K562 (cell line): ENCODE measurements at regions of chr9 and their contacts with region 1.

Region 1: DNA sequence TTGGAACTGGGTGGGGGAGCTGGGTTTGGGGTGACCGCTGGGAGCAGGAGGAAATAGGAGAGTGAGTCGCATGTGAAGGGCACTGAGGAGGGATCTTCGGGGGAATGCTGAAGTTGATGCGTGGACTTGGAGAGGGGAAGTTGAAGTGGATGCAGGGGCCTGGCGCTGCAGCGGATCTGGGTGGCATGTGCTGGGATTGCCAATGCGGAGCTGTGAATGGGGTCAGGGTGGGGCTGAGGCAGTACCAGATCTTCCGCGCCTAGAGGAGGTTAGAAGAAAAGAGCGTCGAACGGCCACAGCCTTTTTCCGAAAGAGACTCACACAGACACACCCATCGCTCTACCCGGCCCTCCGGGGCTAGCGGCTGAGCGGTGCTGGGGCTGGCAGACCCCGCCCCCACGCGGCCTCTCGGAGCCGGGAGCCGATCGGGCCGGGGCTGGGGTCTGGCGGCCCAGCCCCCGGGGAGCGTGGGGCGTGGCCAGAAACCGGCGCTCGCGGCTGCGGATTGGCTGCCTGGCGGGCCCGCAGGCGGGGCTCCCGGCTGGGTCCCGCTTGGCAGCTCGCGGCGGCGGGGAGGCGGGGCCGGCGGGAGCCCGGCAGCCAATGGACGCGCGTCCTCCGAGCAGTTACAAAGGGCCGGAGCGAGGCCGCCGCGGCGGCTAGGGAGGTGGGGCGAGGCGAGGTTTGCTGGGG is at the start of gene TGFBR1:
- DNase-seq: peak; percentile 96 to 99 (median 99)
- ATAC-seq: peak; percentile 92
- H3K4me3 ChIP-seq: peak within 1 kb of the TSS; percentile 76
- H3K27ac ChIP-seq: peak within 1 kb of the TSS; percentile 75
- H3K4me1 ChIP-seq: peaks cover 22 to 38% of the 10 kb centered on the region in 2 experiments
- H3K27me3 ChIP-seq: no peaks in the 10 kb centered on the region
- CTCF ChIP-seq: peak; percentile 18 to 39 (median 34); a peak in 3 of 6 replicates
- EP300 ChIP-seq: no peak
- POLR2A ChIP-seq: peak; percentile 74
- RAD21 ChIP-seq: peak; percentile 46 to 65
- polyA plus RNA-seq, gene TGFBR1: 15.9 to 57.6 TPM

Region 2: DNA sequence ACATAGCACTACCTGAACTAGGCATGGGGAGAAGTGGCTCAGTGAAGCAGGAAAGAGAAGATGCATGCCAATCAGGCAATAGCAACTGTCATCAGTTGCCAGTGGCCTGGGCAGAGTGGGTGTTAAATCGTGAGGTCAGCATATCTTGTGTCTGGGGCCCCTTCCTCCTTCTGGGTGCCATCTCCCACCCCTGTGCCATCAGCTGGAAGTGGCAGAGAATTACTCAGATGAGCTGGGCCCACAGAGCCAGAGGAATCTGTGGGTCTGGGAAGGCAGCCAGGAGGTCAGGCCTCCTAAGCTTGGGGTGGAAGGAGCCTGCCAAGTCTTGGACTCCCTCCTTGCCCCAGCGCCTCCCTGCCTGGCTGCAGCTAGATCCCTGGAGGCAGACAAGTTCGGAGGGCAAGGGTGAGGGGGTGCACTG is 230.6 kb before region 1 on chr9:
- CTCF ChIA-PET with region 1: no interaction called
- POLR2A ChIA-PET with region 1: no interaction called
- in situ Hi-C with region 1: no loop called
- intact Hi-C with region 1: no loop called
- DNase-seq: no peak
- ATAC-seq: no peak
- H3K4me3 ChIP-seq: no peak overlapping the region
- H3K27ac ChIP-seq: no peak overlapping the region
- H3K4me1 ChIP-seq: peaks cover 0 to 8% of the 10 kb centered on the region in 2 experiments; a peak in 3 of 5 replicates
- H3K27me3 ChIP-seq: no peaks in the 10 kb centered on the region
- CTCF ChIP-seq: no peak
- EP300 ChIP-seq: no peak
- POLR2A ChIP-seq: no peak
- RAD21 ChIP-seq: no peak

Region 3: GRCh38 chr9:99057665-99058625 is 46.7 kb before region 1 on chr9:
- CTCF ChIA-PET with region 1: no interaction called
- POLR2A ChIA-PET with region 1: interaction called, 7 read pairs
- in situ Hi-C with region 1: no loop called
- intact Hi-C with region 1: loop called (anchors 5 kb)
- DNase-seq: peak; percentile 61 to 94 (median 78)
- ATAC-seq: peak; percentile 89
- H3K4me3 ChIP-seq: 0 out of 2 replicates have a peak overlapping the region, but pooled peaks have one; percentile 4
- H3K27ac ChIP-seq: peak overlapping the region; percentile 83
- H3K4me1 ChIP-seq: peaks cover 13 to 50% of the 10 kb centered on the region in 2 experiments
- H3K27me3 ChIP-seq: no peaks in the 10 kb centered on the region
- CTCF ChIP-seq: no peak
- EP300 ChIP-seq: peak; percentile 87
- POLR2A ChIP-seq: no peak
- RAD21 ChIP-seq: peak in 1 of 2 experiments; percentile 32; a peak in 2 of 4 replicates

Region 4: GRCh38 chr9:99085949-99086948 is 18.4 kb before region 1 on chr9:
- CTCF ChIA-PET with region 1: no interaction called
- POLR2A ChIA-PET with region 1: interaction called, 15 read pairs
- in situ Hi-C with region 1: no loop called
- intact Hi-C with region 1: no loop called
- DNase-seq: no peak
- ATAC-seq: peak; percentile 42; the same call in 1 of the 3 replicates
- H3K4me3 ChIP-seq: no peak overlapping the region
- H3K27ac ChIP-seq: no peak overlapping the region
- H3K4me1 ChIP-seq: peaks cover 0 to 11% of the 10 kb centered on the region in 2 experiments; a peak in 3 of 5 replicates
- H3K27me3 ChIP-seq: no peaks in the 10 kb centered on the region
- CTCF ChIP-seq: no peak
- EP300 ChIP-seq: no peak
- POLR2A ChIP-seq: no peak
- RAD21 ChIP-seq: no peak

Region 5: GRCh38 chr9:99092643-99093491 is 11.7 kb before region 1 on chr9:
- CTCF ChIA-PET with region 1: no interaction called
- POLR2A ChIA-PET with region 1: interaction called, 22 read pairs
- in situ Hi-C with region 1: no loop called
- intact Hi-C with region 1: no loop called
- DNase-seq: peak; percentile 34 to 78 (median 56)
- ATAC-seq: peak; percentile 70
- H3K4me3 ChIP-seq: no peak overlapping the region
- H3K27ac ChIP-seq: peak overlapping the region; percentile 53
- H3K4me1 ChIP-seq: peaks cover 9 to 37% of the 10 kb centered on the region in 2 experiments
- H3K27me3 ChIP-seq: no peaks in the 10 kb centered on the region
- CTCF ChIP-seq: no peak
- EP300 ChIP-seq: no peak
- POLR2A ChIP-seq: peak; percentile 32; the same call in 1 of the 2 replicates
- RAD21 ChIP-seq: no peak

Region 6: GRCh38 chr9:99140685-99141314 is 36.2 kb after region 1 on chr9:
- CTCF ChIA-PET with region 1: no interaction called
- POLR2A ChIA-PET with region 1: no interaction called
- in situ Hi-C with region 1: no loop called
- intact Hi-C with region 1: loop called (anchors 2 kb)
- DNase-seq: peak; percentile 60 to 70 (median 66)
- ATAC-seq: peak; percentile 96
- H3K4me3 ChIP-seq: no peak overlapping the region
- H3K27ac ChIP-seq: no peak overlapping the region
- H3K4me1 ChIP-seq: peaks cover 0 to 15% of the 10 kb centered on the region in 2 experiments; a peak in 3 of 5 replicates
- H3K27me3 ChIP-seq: no peaks in the 10 kb centered on the region
- CTCF ChIP-seq: peak; percentile 85 to 88 (median 86)
- EP300 ChIP-seq: no peak
- POLR2A ChIP-seq: no peak
- RAD21 ChIP-seq: peak; percentile 94 to 97

Region 7: DNA sequence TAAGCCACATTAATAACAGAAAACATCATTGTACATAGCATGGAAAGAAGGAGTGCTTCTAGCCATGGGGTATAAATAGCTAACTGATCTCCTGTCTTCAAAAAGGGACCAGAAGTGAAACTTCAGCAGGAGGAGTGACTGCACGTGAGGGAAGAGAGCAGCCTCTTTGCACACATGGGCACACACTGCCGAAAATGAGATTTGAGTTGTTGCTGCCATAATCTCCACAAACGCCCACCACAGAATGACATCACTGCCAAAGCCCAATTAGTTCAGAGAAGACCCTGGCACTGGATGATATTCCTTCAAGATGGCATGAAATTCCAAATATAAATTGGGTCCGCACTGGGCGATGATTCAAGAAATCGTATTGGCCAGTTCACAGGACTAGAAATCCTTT is 478.2 kb after region 1 on chr9:
- CTCF ChIA-PET with region 1: no interaction called
- POLR2A ChIA-PET with region 1: no interaction called
- in situ Hi-C with region 1: no loop called
- intact Hi-C with region 1: no loop called
- DNase-seq: no peak
- ATAC-seq: no peak
- H3K4me3 ChIP-seq: no peak overlapping the region
- H3K27ac ChIP-seq: no peak overlapping the region
- H3K4me1 ChIP-seq: no peaks in the 10 kb centered on the region
- H3K27me3 ChIP-seq: no peaks in the 10 kb centered on the region
- CTCF ChIP-seq: no peak
- EP300 ChIP-seq: no peak
- POLR2A ChIP-seq: no peak
- RAD21 ChIP-seq: no peak